PC-3 (cell line): ENCODE measurements at regions of chr12 and their contacts with region 1.

Region 1: DNA sequence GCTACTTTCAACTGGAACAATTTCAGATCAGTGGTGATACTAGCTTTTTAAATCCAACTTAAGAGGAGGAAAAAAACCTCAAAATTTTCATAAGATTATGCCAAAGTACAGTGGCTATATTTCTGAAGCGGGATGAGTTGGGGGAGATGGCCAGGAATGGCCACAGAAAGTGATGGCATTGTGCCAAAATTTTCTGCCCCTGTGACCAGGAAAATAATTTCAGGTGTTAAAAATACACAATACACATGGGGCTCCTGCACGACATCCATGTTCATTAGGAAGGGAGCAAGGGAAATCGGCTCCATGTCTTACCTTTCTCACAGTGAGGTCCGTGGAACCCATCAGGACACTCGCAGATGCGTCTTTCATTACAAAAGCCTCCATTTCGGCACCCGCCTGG is 53.7 kb downstream of the WIF1 start:
- DNase-seq: no peak
- ATAC-seq: no peak
- H3K4me3 ChIP-seq: no peak overlapping the region
- H3K27ac ChIP-seq: no peak overlapping the region
- H3K4me1 ChIP-seq: no peaks in the 10 kb centered on the region
- H3K27me3 ChIP-seq: peaks cover 2% of the 10 kb centered on the region
- CTCF ChIP-seq: no peak

Region 2: GRCh38 chr12:65259501-65259900 is 192.1 kb after region 1 on chr12:
- CTCF ChIA-PET with region 1: no interaction called
- POLR2A ChIA-PET with region 1: interaction called, 20 read pairs
- intact Hi-C with region 1: no loop called
- DNase-seq: no peak
- ATAC-seq: no peak
- H3K4me3 ChIP-seq: no peak overlapping the region
- H3K27ac ChIP-seq: no peak overlapping the region
- H3K4me1 ChIP-seq: no peaks in the 10 kb centered on the region
- H3K27me3 ChIP-seq: no peaks in the 10 kb centered on the region
- CTCF ChIP-seq: no peak